OCI-LY7 (cell line): ENCODE measurements at regions of chr2 and their contacts with region 1.

Region 1: GRCh38 chr2:64562148-64562784 is 38.1 kb downstream of the AFTPH start:
- DNase-seq: peak; percentile 59
- H3K4me3 ChIP-seq: no peak overlapping the region
- H3K27ac ChIP-seq: peak overlapping the region; percentile 29
- H3K4me1 ChIP-seq: peaks cover 16% of the 10 kb centered on the region
- CTCF ChIP-seq: peak; percentile 88

Region 2: DNA sequence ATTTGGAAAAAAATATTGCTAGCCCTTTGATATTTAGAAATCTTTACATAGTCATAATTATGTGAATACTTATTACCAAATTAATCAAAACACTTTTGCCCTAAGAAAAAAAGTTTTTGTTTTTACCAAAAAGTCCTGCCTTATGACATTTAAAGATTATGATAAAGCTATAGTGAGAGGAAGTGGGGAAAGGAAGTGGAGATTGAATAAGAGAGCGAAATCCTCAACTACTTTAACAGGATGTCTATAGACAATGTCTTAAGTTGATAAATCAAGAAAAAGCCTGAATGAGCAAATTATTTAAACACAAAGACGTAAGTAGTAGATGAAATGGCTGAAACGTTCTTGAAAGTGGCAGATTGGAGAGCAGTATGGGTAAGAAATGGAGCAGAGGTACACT is 522.1 kb before region 1 on chr2:
- CTCF ChIA-PET with region 1: no interaction called
- POLR2A ChIA-PET with region 1: no interaction called
- intact Hi-C with region 1: loop called (anchors 10 kb)
- DNase-seq: no peak
- H3K4me3 ChIP-seq: no peak overlapping the region
- H3K27ac ChIP-seq: no peak overlapping the region
- H3K4me1 ChIP-seq: peaks cover 12% of the 10 kb centered on the region
- CTCF ChIP-seq: no peak

Region 3: DNA sequence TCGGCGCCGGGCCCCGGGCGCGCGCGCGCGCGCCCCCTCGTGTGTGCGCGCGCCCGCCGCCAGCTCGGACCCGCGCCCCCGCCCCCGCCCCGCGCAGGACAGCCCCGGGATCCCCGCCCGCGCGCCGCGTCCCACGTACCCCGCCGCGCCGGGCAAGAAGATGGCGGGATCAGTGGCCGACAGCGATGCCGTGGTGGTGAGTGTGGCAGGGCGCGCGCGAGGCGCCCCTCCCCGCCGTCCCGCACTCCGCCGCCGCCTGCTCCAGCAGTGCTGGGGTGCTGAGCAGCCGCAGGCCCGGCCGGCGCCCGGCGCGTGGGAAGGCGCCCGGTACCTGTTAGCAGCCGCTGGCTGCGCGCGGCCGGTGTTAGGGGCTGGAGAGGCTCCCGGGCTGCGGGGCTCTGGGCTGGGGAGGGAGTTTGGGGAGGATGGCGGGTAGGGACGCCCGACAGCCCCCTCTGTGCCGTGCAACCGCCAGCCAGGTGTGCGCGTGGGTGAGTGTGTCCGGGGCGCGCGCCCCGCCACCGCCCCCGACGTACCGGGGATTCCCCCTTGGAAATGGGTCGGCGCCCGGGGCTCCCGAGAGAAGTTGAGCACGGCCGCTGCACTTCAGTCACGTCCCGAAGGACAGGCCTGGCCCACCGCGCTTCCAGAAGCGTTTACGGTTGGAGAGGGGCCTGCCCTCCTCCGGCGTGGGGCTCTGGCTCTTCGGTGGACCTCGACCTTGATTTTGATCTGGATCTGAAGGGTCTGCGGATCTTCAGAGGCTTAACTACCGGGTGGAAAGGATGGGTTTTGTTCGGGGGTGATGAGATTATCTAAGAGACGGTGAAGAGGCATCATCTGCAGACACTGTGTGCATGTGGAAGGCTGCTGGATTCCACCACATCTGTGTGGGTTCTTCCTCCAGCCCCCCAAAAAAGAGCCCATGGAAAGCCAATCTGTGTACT is 107.6 kb before region 1 on chr2:
- CTCF ChIA-PET with region 1: no interaction called
- POLR2A ChIA-PET with region 1: no interaction called
- intact Hi-C with region 1: loop called (anchors 5 kb)
- DNase-seq: peak; percentile 75
- H3K4me3 ChIP-seq: peak overlapping the region; percentile 71
- H3K27ac ChIP-seq: no peak overlapping the region
- H3K4me1 ChIP-seq: peaks cover 17% of the 10 kb centered on the region
- CTCF ChIP-seq: no peak